AG04449 (cell line): ENCODE measurements at regions of chr17 and their contacts with region 1.

Region 1: GRCh38 chr17:31524926-31525800 is 133.7 kb downstream of the RAB11FIP4 start:
- DNase-seq: peak; percentile 80
- H3K4me3 ChIP-seq: no peak overlapping the region
- CTCF ChIP-seq: peak; percentile 89

Region 2: GRCh38 chr17:31388770-31389661 is 136.1 kb before region 1 on chr17:
- CTCF ChIA-PET with region 1: interaction called, 58 read pairs
- POLR2A ChIA-PET with region 1: no interaction called
- DNase-seq: no peak
- H3K4me3 ChIP-seq: no peak overlapping the region
- CTCF ChIP-seq: peak; percentile 77

Region 3: DNA sequence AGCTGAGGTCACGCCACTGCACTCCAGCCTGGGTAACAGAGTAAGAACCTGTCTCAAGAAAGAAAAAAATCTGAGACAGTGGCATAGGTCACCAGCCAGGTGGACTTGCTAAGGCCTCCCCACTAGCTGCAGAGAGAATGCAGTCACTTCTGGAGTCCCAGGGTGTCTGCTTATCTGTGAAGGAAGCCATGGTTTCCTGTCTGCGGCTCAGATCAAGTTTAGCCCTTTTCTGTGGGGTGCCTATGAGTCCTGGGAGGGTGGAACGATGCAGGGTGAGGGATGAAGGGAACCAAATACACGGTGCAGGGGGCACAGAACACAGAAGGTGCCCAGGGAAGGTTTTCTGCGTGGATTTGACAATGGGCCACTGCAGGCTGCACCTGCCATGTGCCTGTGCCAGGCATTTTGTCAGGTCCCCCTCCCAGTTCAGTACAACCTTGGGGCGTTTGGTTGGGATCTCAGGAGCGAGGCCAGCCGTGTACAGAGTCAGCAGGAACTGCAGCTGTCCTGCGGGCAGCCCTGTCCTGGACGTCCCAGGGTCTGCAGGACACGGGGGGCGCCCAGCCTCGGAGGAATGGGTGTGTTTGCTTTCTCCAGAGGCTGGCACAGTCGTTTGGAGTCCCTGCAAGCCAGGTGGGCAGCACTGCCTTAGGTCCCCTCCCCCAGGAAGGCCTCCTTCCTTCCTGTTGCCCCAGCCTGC is 91.9 kb before region 1 on chr17:
- CTCF ChIA-PET with region 1: interaction called, 196 read pairs
- POLR2A ChIA-PET with region 1: no interaction called
- DNase-seq: no peak
- H3K4me3 ChIP-seq: no peak overlapping the region
- CTCF ChIP-seq: no peak

Region 4: GRCh38 chr17:31448467-31449077 is 76.6 kb before region 1 on chr17:
- CTCF ChIA-PET with region 1: interaction called, 29 read pairs
- POLR2A ChIA-PET with region 1: no interaction called
- DNase-seq: peak; percentile 9
- H3K4me3 ChIP-seq: no peak overlapping the region
- CTCF ChIP-seq: no peak

Region 5: DNA sequence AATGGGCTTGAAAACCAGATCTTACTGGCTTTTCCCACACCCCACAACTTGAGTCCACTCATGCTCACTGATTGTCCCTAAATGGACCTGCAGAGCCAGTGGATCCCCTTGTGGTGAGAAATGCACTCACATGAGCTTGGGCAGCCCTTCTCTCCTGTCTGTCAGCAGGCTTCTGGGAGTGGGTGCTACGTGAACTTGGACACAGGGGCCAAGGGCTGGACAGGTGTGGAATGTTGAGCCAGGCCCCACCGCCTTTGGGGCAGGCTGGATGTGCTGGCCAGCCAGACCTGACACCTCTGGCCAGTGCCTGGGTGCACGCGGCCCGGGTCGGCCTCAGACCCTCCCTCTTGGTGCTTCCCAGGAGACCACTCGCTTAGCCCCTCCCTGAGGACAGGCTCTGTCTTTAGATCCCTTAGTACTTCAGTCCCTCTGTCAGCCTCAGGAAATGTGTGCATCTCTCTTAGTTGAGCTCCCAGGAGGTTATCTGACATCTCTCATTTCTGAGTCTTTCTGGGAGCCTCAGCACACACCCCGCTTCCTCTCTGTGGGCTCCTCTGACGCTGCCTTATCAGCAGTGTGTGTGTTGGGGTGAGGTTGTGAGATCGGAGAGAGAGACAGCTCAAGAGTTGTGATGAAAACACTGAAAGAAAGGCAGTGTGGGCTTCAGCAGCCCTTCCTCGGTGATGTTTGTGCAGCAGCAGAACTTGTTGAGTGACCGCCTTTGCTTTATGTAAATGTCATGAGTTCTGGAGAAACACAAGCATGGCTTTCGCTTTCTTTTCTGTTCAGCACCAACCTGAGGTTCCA is 16.7 kb before region 1 on chr17:
- CTCF ChIA-PET with region 1: interaction called, 27 read pairs
- POLR2A ChIA-PET with region 1: no interaction called
- DNase-seq: no peak
- H3K4me3 ChIP-seq: no peak overlapping the region
- CTCF ChIP-seq: peak; percentile 21

Region 6: DNA sequence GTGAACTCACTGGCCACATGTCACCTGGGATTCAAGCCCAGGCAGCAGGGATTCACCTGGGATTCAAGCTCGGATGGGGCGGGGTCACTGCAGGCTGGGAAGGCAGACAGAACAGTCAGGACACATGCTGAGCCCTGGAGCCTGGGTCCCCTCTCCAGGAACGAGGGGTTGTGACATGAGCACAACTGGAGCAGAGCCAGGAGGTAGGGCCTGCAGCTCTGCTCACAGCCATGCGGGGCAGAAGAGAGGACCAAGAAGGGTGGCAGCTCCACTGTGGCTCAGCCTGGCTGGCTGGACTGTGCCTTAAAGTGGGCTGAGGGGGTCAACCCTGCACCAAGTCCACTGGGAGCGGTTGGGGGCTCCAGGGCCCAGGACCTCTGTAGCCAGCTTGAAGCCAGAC is 16.4 kb after region 1 on chr17:
- CTCF ChIA-PET with region 1: interaction called, 14 read pairs
- POLR2A ChIA-PET with region 1: no interaction called
- DNase-seq: no peak
- H3K4me3 ChIP-seq: no peak overlapping the region
- CTCF ChIP-seq: peak; percentile 16

Region 7: GRCh38 chr17:31564883-31565301 is 39.7 kb after region 1 on chr17:
- CTCF ChIA-PET with region 1: no interaction called
- POLR2A ChIA-PET with region 1: no interaction called
- DNase-seq: no peak
- H3K4me3 ChIP-seq: no peak overlapping the region; the same call in 1 of the 2 replicates
- CTCF ChIP-seq: no peak

Region 8: GRCh38 chr17:31627960-31628359 is 102.8 kb after region 1 on chr17:
- CTCF ChIA-PET with region 1: no interaction called
- POLR2A ChIA-PET with region 1: no interaction called
- DNase-seq: peak; percentile 69
- H3K4me3 ChIP-seq: no peak overlapping the region
- CTCF ChIP-seq: no peak

Region 9: GRCh38 chr17:31858642-31859473 is 333.7 kb after region 1 on chr17 and contains the start of gene COPRS:
- CTCF ChIA-PET with region 1: interaction called, 10 read pairs
- POLR2A ChIA-PET with region 1: no interaction called
- DNase-seq: no peak
- H3K4me3 ChIP-seq: peak within 1 kb of the TSS; percentile 72
- CTCF ChIP-seq: peak; percentile 26